Posterior cingulate gyrus (tissue), 11 donors: ENCODE measurements at regions of chr1 and their contacts with region 1.

Region 1: GRCh38 chr1:94962409-94963265 is 35.7 kb upstream of the CNN3 start:
- DNase-seq: peak in 1 of 10 donors; percentile 56

Region 2: DNA sequence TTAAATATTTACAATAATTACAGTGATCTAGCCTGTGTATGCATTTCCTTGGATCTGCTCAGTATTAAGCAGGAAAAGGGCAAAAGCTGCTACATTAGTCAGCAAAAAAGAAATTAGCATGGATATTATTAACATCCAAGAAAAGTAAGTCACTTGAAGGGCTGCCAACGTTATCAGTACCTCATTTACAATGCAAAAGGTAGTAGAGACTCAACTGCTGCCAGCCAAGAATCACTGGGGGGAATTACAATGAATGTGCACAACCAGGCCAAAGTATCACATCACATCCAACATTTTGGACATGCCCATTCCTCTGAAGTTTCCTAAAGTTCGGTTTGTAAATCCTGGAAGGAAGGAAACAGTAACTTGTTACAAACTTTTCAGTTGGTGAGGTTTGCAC is 37.6 kb before region 1 on chr1:
- intact Hi-C with region 1: no loop called
- DNase-seq: no peak

Region 3: DNA sequence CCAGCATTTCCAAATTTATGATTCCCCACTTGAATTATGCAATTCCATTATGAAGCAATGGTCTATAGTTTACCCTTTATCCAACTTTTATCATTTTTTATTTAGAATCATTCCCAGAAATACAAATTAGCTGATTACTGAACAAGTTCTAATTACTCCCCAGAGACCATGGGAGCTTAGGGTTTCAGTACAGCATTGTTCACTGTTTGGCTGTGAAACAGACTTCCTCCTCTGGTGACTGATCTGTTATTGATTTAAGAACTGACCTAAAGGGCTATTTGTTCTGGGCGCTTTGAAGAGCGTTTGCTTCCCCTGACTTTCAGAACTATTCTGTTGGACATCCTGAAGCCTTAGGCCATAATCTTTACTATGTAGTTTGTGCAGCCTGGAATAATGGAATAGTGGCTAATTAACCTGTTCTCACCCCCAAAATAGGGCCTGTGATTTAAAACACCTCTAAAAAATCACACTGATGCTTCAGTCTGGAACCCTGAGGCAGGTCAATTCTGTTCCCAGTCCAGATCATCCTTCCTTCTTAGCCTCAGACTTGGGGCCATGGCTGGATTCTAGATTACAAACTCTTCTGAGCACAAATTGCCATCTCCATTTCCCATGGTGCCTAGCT is 51.4 kb after region 1 on chr1:
- intact Hi-C with region 1: loop called (anchors 10 kb)
- DNase-seq: no peak

Region 4: GRCh38 chr1:95057351-95057750 is 94.7 kb after region 1 on chr1:
- intact Hi-C with region 1: no loop called
- DNase-seq: no peak

Region 5: DNA sequence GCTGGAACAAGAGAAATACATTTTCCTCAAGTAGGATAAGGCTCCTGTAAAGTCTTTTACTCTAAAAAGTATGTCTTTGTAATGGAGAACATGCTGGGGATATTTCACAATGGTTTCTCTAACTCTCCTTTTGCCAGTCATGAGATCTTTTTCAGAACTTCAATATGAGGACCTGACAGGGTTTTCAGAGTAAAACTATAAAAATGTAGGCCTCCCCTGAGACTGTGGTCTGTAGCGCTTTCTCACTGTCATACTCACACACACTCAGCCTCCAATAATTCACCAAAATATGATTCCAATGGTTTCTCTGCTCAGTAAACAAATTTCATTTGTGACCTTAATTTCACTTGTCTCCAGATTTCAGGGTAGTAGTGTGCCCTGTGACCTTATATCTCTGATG is 1318.9 kb after region 1 on chr1:
- intact Hi-C with region 1: no loop called
- DNase-seq: no peak